GM18951 (cell line): ENCODE measurements at regions of chr10 and their contacts with region 1.

Region 1: DNA sequence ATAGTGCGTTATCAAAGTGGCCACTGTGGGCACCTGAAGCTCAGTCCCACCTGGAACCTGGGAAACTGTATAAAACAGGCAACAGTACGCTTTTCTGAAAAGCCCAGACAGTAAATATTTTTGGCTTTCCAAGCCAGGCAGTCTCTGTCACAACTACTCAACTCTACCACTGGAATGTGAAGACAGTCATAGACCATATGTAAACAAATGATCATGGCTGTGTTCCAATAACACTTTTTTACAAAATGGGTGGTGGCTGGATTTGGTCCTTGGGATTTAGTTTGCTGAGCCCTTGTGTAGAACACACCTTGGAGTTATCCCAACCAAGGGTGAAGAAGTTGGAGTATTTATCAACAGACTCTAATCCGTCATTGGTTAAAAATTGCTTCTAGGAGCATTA is 259.9 kb downstream of the SKIDA1 start:
- POLR2A ChIP-seq: no peak

Region 2: GRCh38 chr10:20858292-20859124 is 407.1 kb before region 1 on chr10:
- in situ Hi-C with region 1: loop called (anchors 25 kb)
- POLR2A ChIP-seq: no peak